ENCODE measurements at regions of chr3 and their contacts with region 1.

Region 1: DNA sequence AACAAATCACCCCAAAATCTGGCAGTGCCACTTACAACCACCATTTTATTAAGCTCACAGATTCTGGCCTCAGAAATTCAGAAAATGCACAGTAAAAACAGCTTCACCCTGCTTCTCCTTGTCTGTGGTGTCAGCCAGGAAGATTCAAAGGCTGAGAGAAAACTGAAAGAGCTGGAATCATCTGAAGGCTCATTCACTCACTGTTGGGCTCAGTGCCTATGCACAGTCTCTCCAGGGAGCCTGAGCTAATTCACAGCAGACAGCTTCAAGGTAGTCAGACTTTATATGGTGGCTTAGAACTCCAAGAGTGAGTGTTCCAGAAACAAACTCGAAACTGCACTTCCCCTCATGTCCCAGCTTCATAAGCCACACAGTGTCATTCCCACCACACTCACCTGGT is 16.5 kb upstream of the PLOD2 start:
- DNase-seq: no peak
- H3K4me3 ChIP-seq: no peak overlapping the region
- H3K27ac ChIP-seq: no peak overlapping the region
- H3K4me1 ChIP-seq: no peaks in the 10 kb centered on the region
- H3K27me3 ChIP-seq: no peaks in the 10 kb centered on the region
- CTCF ChIP-seq: no peak

Region 2: DNA sequence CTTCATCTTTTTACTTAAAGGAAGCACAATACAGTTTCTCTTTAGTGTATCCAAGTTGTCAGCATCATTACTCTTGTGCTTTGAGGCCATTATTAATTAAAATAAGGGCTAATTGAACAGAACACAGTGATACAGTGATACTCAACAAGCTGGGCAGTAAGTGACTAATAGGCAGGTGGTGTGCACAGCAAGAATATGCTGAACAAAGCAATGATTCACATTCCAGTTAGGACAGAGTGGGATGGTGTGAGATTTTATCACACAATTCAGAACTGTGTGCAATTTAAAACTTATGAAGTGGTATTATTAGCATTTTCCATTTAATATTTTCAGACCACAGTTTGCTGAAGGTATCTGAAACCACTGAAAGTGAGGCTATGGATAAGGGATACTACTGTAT is 133.5 kb before region 1 on chr3:
- intact Hi-C with region 1: no loop called
- DNase-seq: no peak
- H3K4me3 ChIP-seq: no peak overlapping the region
- H3K27ac ChIP-seq: no peak overlapping the region
- H3K4me1 ChIP-seq: no peaks in the 10 kb centered on the region
- H3K27me3 ChIP-seq: no peaks in the 10 kb centered on the region
- CTCF ChIP-seq: no peak

Region 3: DNA sequence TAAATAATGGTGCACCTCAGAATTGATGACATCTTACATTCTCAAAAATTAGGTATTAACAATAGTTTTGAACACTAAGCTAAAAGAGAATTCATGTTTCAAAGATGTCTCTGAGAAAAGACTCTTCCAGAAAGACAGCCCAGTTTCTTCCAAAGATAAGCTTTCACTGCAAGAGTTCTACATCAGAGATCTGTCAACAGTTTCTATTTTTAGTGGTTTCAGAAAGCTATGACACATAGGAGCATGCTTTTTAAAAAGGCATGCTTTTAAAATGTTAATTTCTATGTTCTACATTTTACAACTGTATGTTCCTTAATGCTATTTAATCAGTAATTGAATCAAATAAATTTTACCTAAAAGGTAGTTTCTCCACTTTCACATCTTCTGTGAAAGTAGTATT is 104.7 kb before region 1 on chr3:
- intact Hi-C with region 1: loop called (anchors 10 kb)
- DNase-seq: no peak
- H3K4me3 ChIP-seq: no peak overlapping the region
- H3K27ac ChIP-seq: no peak overlapping the region
- H3K4me1 ChIP-seq: no peaks in the 10 kb centered on the region
- H3K27me3 ChIP-seq: no peaks in the 10 kb centered on the region
- CTCF ChIP-seq: no peak

Region 4: GRCh38 chr3:146117406-146118285 is 59.9 kb before region 1 on chr3:
- intact Hi-C with region 1: no loop called
- DNase-seq: peak in 4 of 5 donors; percentile 20 to 84 (median 52)
- H3K4me3 ChIP-seq: no peak overlapping the region
- H3K27ac ChIP-seq: no peak overlapping the region
- H3K4me1 ChIP-seq: no peaks in the 10 kb centered on the region
- H3K27me3 ChIP-seq: no peaks in the 10 kb centered on the region
- CTCF ChIP-seq: no peak

Region 5: DNA sequence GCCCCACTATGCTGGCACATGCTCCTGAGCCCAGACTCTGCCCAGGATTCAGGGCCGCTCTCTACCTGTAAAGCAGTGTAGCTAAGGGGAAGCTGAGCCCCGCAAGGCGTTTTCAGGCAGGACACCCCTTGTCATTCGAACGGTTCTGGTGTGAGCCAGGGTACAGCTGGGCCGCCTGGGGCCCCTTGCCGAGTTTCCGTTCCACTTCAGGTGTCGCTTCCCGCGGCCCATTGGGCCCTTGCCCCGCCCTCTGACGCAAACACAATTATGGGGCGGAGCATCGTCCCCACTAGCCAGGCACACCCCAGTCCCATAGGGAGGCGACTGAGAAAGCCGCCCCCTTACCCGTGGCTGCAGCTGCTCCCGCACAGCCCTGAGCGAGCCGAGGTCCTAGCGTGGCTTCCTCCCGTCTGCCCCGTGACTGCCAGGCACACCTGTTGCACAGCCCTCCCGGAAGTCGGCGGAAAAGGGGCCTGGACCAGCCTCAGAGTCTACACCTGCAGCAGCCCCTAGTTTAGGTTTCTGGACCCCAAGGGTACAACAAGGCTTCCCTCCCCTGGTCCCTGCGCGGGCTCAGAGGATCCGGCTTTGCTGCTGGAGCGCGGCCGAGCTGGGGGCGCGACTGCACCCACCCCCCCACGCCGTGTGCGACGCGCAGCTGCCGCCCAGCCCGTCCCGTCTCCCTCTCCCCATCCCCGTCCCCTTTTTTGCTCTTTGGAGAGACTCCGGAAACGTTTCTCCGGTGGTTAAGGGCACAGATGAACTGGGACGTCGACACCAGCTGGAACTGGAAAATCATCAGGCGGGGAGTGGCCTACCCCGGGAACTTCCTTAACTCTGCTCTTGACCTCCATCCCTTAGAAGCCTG is 291.9 kb after region 1 on chr3 and contains the start of gene PLSCR2:
- intact Hi-C with region 1: no loop called
- DNase-seq: peak; percentile 77 to 95 (median 85)
- H3K4me3 ChIP-seq: peak within 1 kb of the TSS; percentile 63 to 79 (median 79)
- H3K27ac ChIP-seq: peak within 1 kb of the TSS; percentile 93 to 95
- H3K4me1 ChIP-seq: peaks cover 0 to 4% (median 0%) of the 10 kb centered on the region in 3 donors
- H3K27me3 ChIP-seq: no peaks in the 10 kb centered on the region
- CTCF ChIP-seq: no peak
- total RNA-seq, gene PLSCR2: 1.4 TPM

Region 6: GRCh38 chr3:146921693-146922092 is 744.2 kb after region 1 on chr3:
- intact Hi-C with region 1: no loop called
- DNase-seq: no peak
- H3K4me3 ChIP-seq: no peak overlapping the region
- H3K27ac ChIP-seq: no peak overlapping the region
- H3K4me1 ChIP-seq: no peaks in the 10 kb centered on the region
- H3K27me3 ChIP-seq: no peaks in the 10 kb centered on the region
- CTCF ChIP-seq: no peak